ENCODE measurements at regions of chr4 and their contacts with region 1.

Region 1: DNA sequence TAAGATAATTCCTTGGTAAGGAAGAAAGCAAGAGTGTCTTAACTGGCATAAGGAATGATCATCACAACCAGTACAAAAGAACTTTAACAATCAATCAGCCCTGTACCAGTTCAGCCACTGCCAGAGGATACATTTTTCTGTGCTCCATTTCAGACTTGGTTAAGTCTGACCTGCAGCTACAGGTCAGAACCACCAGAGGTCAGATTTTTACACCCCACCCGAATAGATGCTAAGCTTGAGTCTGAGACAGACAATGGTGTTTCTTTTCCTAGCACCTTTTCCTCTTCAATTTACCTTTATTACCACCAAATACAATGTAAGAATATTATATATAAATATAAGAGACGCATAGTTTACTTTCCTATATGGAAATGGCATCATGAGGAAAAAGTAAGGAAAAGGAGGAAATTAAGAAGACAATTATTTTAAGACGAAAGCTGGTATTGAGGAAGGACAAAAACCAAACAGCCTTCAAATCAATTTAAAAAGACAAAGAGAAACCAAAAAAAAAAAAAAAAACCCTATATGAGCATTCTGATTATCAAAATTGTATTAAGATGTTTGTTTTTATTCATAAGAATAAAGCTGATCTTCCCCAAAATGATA is 215.3 kb upstream of the TTC29 start:
- DNase-seq: no peak
- ATAC-seq: peak in 3 of 4 donors; percentile 39 to 64 (median 60)
- H3K4me3 ChIP-seq: no peak overlapping the region
- H3K27ac ChIP-seq: no peak overlapping the region
- H3K4me1 ChIP-seq: no peaks in the 10 kb centered on the region
- H3K27me3 ChIP-seq: no peaks in the 10 kb centered on the region
- CTCF ChIP-seq: peak; percentile 67

Region 2: DNA sequence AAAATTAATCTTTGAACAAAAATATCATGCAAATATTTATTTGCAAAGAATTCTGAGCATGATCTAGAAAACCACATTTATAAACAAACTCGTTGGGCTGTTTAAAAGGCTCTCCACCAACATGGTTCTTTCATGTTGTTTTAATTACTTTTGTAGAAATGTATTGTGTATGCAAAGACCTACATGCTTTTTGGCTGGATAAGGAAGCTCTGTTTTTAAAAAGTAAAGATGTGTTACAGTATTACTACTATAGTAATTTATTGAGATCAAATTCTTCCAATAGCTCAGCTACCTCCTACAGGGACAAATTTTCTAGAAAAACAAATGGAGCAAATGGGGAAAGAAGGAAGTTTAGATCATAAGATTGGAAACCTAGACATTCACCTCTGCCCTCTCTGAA is 37.9 kb before region 1 on chr4:
- intact Hi-C with region 1: loop called in 1 of 2 experiments (anchors 5 kb)
- DNase-seq: no peak
- ATAC-seq: no peak
- H3K4me3 ChIP-seq: no peak overlapping the region
- H3K27ac ChIP-seq: no peak overlapping the region
- H3K4me1 ChIP-seq: no peaks in the 10 kb centered on the region
- H3K27me3 ChIP-seq: no peaks in the 10 kb centered on the region
- CTCF ChIP-seq: no peak

Region 3: GRCh38 chr4:147182041-147182440 is 21.0 kb after region 1 on chr4:
- intact Hi-C with region 1: no loop called
- DNase-seq: no peak
- ATAC-seq: no peak
- H3K4me3 ChIP-seq: no peak overlapping the region
- H3K27ac ChIP-seq: no peak overlapping the region
- H3K4me1 ChIP-seq: no peaks in the 10 kb centered on the region
- H3K27me3 ChIP-seq: no peaks in the 10 kb centered on the region
- CTCF ChIP-seq: no peak